ENCODE measurements at regions of chr20 and their contacts with region 1.

Region 1: DNA sequence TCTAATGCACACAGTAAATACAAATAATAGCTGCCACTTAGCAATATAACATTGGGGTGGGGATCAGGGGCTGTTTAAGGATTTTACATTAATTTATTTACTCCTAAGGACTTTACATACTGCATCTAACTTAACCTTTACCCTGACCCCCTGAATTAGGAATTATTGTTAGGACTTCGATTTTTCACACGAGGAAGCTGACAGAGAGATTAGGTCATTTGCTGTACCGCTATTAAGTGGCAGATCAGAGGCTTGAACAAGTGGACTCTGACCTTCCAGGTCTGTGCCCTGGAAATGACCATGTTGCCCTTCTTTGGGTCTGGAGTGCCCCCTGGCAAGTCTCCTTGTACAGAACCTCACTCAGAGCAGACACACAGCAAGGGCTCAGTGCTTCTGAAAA is 5.2 kb upstream of the ELMO2 start:
- DNase-seq: no peak
- ATAC-seq: no peak
- H3K4me3 ChIP-seq: no peak overlapping the region
- H3K4me3 Mint-ChIP-seq: no peak overlapping the region
- H3K27ac ChIP-seq: no peak overlapping the region
- H3K27ac Mint-ChIP-seq: peak overlapping the region in 1 of 2 donors; percentile 73
- H3K4me1 ChIP-seq: peaks cover 16% of the 10 kb centered on the region
- H3K4me1 Mint-ChIP-seq: peaks cover 21 to 27% of the 10 kb centered on the region in 2 donors
- H3K27me3 ChIP-seq: no peaks in the 10 kb centered on the region
- H3K27me3 Mint-ChIP-seq: peaks cover 0 to 9% of the 10 kb centered on the region in 2 donors
- CTCF ChIP-seq: no peak

Region 2: GRCh38 chr20:46307139-46307998 is 104.3 kb before region 1 on chr20:
- intact Hi-C with region 1: loop called (anchors 1 kb)
- DNase-seq: peak; percentile 49 to 87
- ATAC-seq: peak; percentile 80 to 90 (median 85)
- H3K4me3 ChIP-seq: no peak overlapping the region
- H3K4me3 Mint-ChIP-seq: peak overlapping the region; percentile 73
- H3K27ac ChIP-seq: no peak overlapping the region
- H3K27ac Mint-ChIP-seq: no peak overlapping the region
- H3K4me1 ChIP-seq: peaks cover 12% of the 10 kb centered on the region
- H3K4me1 Mint-ChIP-seq: peaks cover 0 to 21% of the 10 kb centered on the region in 2 donors
- H3K27me3 ChIP-seq: peaks cover 33% of the 10 kb centered on the region
- H3K27me3 Mint-ChIP-seq: peaks cover 52 to 76% of the 10 kb centered on the region in 2 donors
- CTCF ChIP-seq: peak; percentile 79

Region 3: GRCh38 chr20:46330072-46330763 is 81.4 kb before region 1 on chr20:
- intact Hi-C with region 1: no loop called
- DNase-seq: no peak
- ATAC-seq: no peak
- H3K4me3 ChIP-seq: no peak overlapping the region
- H3K4me3 Mint-ChIP-seq: no peak overlapping the region
- H3K27ac ChIP-seq: no peak overlapping the region
- H3K27ac Mint-ChIP-seq: no peak overlapping the region
- H3K4me1 ChIP-seq: no peaks in the 10 kb centered on the region
- H3K4me1 Mint-ChIP-seq: no peaks in the 10 kb centered on the region
- H3K27me3 ChIP-seq: peaks cover 2% of the 10 kb centered on the region
- H3K27me3 Mint-ChIP-seq: peaks cover 10 to 11% of the 10 kb centered on the region in 2 donors
- CTCF ChIP-seq: no peak

Region 4: DNA sequence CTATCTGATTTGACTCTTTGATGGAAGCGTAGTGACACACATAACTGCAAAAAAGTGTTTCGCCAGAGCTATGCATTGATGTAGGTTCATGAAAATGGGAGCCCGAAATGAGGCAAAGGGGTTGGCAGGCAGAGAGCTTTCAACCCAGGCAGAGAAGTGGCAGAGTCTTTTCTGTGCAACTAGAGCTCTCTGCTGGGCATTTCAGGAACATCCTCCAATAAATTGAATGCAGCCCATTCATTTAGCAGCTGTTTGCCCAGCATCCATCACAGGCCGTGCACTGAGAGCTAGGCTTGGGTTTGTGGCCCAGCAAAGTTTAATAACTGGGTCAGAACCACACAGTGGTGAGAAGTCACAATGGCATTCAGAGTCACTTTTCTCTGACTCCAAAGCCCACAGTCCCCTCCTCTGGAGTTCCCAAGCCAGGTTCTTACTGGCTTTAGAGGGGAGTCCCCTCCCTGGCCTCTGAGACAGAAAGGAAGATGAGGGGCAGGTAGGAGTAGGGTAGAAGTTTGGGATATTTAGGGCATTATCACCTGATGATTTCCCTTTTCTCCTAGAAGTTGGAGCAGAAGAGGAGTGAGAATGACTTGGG is 26.6 kb after region 1 on chr20:
- intact Hi-C with region 1: no loop called
- DNase-seq: peak in 1 of 2 donors; percentile 53
- ATAC-seq: peak in 1 of 3 donors; percentile 50
- H3K4me3 ChIP-seq: no peak overlapping the region
- H3K4me3 Mint-ChIP-seq: no peak overlapping the region
- H3K27ac ChIP-seq: no peak overlapping the region
- H3K27ac Mint-ChIP-seq: no peak overlapping the region
- H3K4me1 ChIP-seq: no peaks in the 10 kb centered on the region
- H3K4me1 Mint-ChIP-seq: no peaks in the 10 kb centered on the region
- H3K27me3 ChIP-seq: no peaks in the 10 kb centered on the region
- H3K27me3 Mint-ChIP-seq: peaks cover 6 to 12% of the 10 kb centered on the region in 2 donors
- CTCF ChIP-seq: no peak

Region 5: DNA sequence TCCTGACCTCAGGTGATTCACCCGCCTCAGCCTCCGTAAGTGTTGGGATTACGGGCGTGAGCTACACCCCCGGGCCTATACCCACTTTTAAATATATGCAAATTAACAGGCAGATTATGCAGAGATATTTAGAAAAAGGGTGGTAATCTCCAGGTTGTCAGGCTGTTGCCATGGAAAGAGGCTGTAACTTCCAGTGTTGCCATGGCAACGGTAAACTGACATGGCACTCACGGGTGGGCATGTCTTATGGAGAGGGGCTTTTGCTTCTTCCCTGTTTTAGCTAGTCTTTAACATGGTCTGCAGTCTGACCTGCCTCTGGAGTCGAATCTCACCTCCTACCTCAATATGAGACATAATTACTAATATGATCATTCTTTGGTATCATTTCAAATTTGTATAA is 56.9 kb after region 1 on chr20:
- intact Hi-C with region 1: no loop called
- DNase-seq: no peak
- ATAC-seq: no peak
- H3K4me3 ChIP-seq: no peak overlapping the region
- H3K4me3 Mint-ChIP-seq: no peak overlapping the region
- H3K27ac ChIP-seq: no peak overlapping the region
- H3K27ac Mint-ChIP-seq: no peak overlapping the region
- H3K4me1 ChIP-seq: no peaks in the 10 kb centered on the region
- H3K4me1 Mint-ChIP-seq: no peaks in the 10 kb centered on the region
- H3K27me3 ChIP-seq: no peaks in the 10 kb centered on the region
- H3K27me3 Mint-ChIP-seq: peaks cover 10 to 37% of the 10 kb centered on the region in 2 donors
- CTCF ChIP-seq: no peak

Measured in natural killer cell (primary cell).